Calu3 (cell line): ENCODE measurements at regions of chr17 and their contacts with region 1.

Region 1: GRCh38 chr17:31437720-31438420 is 46.4 kb downstream of the RAB11FIP4 start:
- DNase-seq: no peak
- H3K4me3 Mint-ChIP-seq: no peak overlapping the region
- H3K27ac Mint-ChIP-seq: no peak overlapping the region
- H3K4me1 Mint-ChIP-seq: no peaks in the 10 kb centered on the region
- H3K27me3 Mint-ChIP-seq: peaks cover 40% of the 10 kb centered on the region
- CTCF ChIP-seq: no peak

Region 2: GRCh38 chr17:31357831-31358394 is 80.0 kb before region 1 on chr17:
- CTCF ChIA-PET with region 1: interaction called, 12 read pairs
- intact Hi-C with region 1: no loop called
- DNase-seq: no peak
- H3K4me3 Mint-ChIP-seq: no peak overlapping the region
- H3K27ac Mint-ChIP-seq: no peak overlapping the region
- H3K4me1 Mint-ChIP-seq: no peaks in the 10 kb centered on the region
- H3K27me3 Mint-ChIP-seq: no peaks in the 10 kb centered on the region
- CTCF ChIP-seq: no peak

Region 3: GRCh38 chr17:31385428-31386285 is 52.2 kb before region 1 on chr17:
- CTCF ChIA-PET with region 1: no interaction called
- intact Hi-C with region 1: no loop called
- DNase-seq: no peak
- H3K4me3 Mint-ChIP-seq: no peak overlapping the region
- H3K27ac Mint-ChIP-seq: no peak overlapping the region
- H3K4me1 Mint-ChIP-seq: no peaks in the 10 kb centered on the region
- H3K27me3 Mint-ChIP-seq: peaks cover 14% of the 10 kb centered on the region
- CTCF ChIP-seq: no peak

Region 4: GRCh38 chr17:31524926-31525800 is 87.3 kb after region 1 on chr17:
- CTCF ChIA-PET with region 1: interaction called, 4 read pairs
- intact Hi-C with region 1: loop called (anchors 1 kb)
- DNase-seq: peak; percentile 95
- H3K4me3 Mint-ChIP-seq: no peak overlapping the region
- H3K27ac Mint-ChIP-seq: no peak overlapping the region
- H3K4me1 Mint-ChIP-seq: no peaks in the 10 kb centered on the region
- H3K27me3 Mint-ChIP-seq: no peaks in the 10 kb centered on the region
- CTCF ChIP-seq: peak; percentile 93

Region 5: GRCh38 chr17:31842183-31843069 is 404.6 kb after region 1 on chr17:
- CTCF ChIA-PET with region 1: interaction called, 4 read pairs
- intact Hi-C with region 1: loop called (anchors 2 kb)
- DNase-seq: peak; percentile 72
- H3K4me3 Mint-ChIP-seq: no peak overlapping the region
- H3K27ac Mint-ChIP-seq: no peak overlapping the region
- H3K4me1 Mint-ChIP-seq: no peaks in the 10 kb centered on the region
- H3K27me3 Mint-ChIP-seq: no peaks in the 10 kb centered on the region
- CTCF ChIP-seq: peak; percentile 93